ENCODE measurements at regions of chr1 and their contacts with region 1.

Region 1: GRCh38 chr1:184805667-184806295 is 51.1 kb upstream of the EDEM3 start:
- DNase-seq: peak; percentile 92
- H3K4me3 ChIP-seq: no peak overlapping the region
- H3K27ac ChIP-seq: no peak overlapping the region
- H3K4me1 ChIP-seq: peaks cover 15% of the 10 kb centered on the region
- H3K27me3 ChIP-seq: no peaks in the 10 kb centered on the region
- CTCF ChIP-seq: peak; percentile 73 to 96 (median 92)
- POLR2A ChIP-seq: no peak

Region 2: GRCh38 chr1:184973272-184974055 is 167.7 kb after region 1 on chr1:
- intact Hi-C with region 1: loop called (anchors 2 kb)
- DNase-seq: peak; percentile 20
- H3K4me3 ChIP-seq: peak overlapping the region; percentile 75 to 85
- H3K27ac ChIP-seq: peak overlapping the region; percentile 68 to 84
- H3K4me1 ChIP-seq: no peaks in the 10 kb centered on the region
- H3K27me3 ChIP-seq: no peaks in the 10 kb centered on the region
- CTCF ChIP-seq: peak in 1 of 4 experiments; percentile 4
- POLR2A ChIP-seq: no peak

Region 3: DNA sequence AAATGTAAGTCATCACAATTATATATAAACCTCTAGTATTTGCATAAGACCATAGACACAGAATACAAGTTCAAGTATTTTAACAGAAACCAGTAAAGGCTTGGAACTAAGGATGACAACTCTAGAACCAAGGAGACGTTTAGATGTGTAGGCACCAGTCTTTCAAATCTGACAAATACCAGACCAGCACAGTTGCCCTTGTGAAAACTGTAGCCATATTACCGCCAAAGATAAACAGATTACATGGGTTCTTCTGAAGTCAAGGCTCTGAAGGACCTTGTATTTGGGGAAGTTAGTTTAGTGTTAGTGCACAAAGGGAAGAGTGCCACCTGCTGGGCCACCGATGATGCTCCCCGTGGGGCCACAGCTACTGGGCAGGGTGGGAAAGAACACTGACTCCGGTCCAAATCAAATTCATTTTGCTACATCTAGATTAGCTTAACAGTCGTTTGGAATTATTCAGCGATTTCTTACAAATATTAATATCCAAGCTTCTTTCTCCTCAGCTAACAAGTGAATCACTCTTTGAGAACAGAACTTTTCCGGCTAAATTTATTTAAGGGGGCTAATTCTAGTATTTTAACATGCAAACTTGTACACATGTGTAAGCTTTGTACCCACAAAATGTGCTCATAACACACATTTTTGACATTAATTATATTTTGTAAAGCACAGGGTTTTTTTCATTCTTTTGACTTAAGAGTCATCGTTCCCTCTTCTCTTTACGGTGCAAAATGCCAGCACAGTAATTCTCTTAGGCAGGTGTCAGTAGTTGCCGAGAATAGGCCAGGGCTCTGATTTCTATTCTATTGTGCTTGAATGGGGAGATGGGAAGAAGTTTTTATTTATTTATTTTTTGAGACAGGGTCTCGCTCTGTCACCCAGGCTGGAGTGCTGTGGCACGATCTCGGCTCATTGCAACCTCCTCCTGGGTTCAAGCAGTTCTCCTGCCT is 176.5 kb after region 1 on chr1:
- intact Hi-C with region 1: loop called (anchors 2 kb)
- DNase-seq: peak; percentile 77
- H3K4me3 ChIP-seq: no peak overlapping the region
- H3K27ac ChIP-seq: no peak overlapping the region
- H3K4me1 ChIP-seq: no peaks in the 10 kb centered on the region
- H3K27me3 ChIP-seq: no peaks in the 10 kb centered on the region
- CTCF ChIP-seq: peak; percentile 80 to 92 (median 88)
- POLR2A ChIP-seq: no peak

Measured in prostate gland (tissue), 2 donors.